OCI-LY7 (cell line): ENCODE measurements at regions of chr15 and their contacts with region 1.

Region 1: GRCh38 chr15:60649845-60650548 is 171.1 kb upstream of the ICE2 start:
- DNase-seq: no peak
- H3K4me3 ChIP-seq: no peak overlapping the region
- H3K27ac ChIP-seq: no peak overlapping the region
- H3K4me1 ChIP-seq: peaks cover 64% of the 10 kb centered on the region
- CTCF ChIP-seq: no peak

Region 2: DNA sequence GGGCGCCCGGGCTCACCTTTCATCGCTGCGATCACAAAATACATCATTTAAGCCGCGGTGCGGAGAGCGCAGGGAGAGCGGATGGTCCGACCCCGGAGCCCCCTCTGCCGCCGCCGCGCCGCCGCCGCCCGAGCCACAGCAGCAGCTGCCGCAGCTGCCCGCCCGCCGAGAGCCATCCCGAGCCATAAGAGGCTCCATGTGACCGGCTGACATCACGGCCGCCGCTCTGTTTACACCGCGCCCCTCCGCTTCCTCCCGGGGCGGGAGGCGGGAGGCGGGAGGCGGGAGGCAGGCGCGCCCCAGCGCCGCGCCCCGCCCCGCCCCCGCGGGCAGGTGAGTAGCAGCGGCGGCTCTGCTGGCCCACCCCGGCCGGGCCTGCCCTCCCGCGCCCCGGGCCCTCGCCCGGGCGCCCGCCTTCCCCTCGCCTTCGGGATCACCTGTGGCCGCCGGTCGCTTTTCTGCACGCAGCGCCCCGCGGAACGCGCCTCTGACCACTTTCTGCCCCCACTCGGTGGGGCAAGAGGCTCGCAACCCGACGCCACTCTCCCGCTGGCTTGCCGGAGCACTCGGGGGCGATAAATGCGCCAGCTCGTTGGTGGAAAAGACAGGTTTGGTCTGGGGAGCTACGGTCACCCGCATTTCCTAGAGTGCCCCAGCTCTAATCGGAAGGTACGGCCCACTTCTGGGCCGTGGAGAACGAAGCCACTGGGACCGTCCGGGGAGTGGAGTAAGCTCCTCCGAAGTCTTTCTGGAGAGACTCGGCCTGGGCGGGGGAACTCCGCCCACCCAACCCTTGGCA is 57.4 kb before region 1 on chr15:
- CTCF ChIA-PET with region 1: interaction called, 3 read pairs
- POLR2A ChIA-PET with region 1: no interaction called
- intact Hi-C with region 1: loop called (anchors 5 kb)
- DNase-seq: peak; percentile 78
- H3K4me3 ChIP-seq: peak overlapping the region; percentile 73
- H3K27ac ChIP-seq: no peak overlapping the region
- H3K4me1 ChIP-seq: peaks cover 17% of the 10 kb centered on the region
- CTCF ChIP-seq: no peak

Region 3: DNA sequence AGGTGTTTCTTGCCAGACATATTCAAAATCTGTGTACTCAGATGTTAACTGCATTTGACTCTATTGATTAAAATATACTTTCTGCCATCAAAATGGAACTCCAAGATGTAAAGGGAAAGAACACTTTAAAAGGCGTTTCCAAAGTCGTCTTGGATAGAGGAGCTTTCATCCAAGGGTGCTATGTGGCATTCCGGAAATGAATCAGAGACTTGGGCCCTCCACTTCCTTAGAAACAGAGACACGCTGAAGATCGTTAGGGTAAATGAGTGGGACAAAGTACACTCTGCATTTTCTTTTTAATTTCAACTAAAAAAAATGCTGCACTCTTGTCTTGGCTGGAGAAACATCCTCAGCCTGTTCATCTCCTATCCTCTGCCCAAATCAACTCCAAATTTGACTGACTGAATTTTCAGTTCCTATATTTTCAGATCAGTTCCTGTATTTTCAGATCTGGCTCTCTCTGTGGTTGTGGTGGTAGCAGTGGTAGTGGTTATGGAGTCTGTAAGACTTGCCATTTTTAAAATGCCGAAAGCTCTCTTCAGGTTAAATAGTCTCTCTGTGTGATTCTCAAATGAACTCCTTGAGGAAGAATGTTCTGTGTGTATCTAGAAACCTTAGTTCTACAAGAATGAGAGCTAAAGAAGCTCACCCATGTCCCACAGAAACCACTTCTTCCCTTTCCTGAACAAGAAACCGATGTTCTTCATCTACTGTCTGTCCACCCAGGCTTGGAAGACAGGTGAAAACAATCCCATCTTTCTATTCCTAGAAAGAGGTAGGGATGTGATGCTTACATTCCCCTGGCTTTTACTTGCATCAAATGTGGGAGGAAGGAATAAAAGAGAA is 14.3 kb before region 1 on chr15:
- CTCF ChIA-PET with region 1: no interaction called
- POLR2A ChIA-PET with region 1: interaction called, 8 read pairs
- intact Hi-C with region 1: loop called (anchors 2 kb)
- DNase-seq: peak; percentile 69
- H3K4me3 ChIP-seq: peak overlapping the region; percentile 38
- H3K27ac ChIP-seq: peak overlapping the region; percentile 33
- H3K4me1 ChIP-seq: peaks cover 20% of the 10 kb centered on the region
- CTCF ChIP-seq: no peak

Region 4: GRCh38 chr15:60695713-60696522 is 45.9 kb after region 1 on chr15:
- CTCF ChIA-PET with region 1: no interaction called
- POLR2A ChIA-PET with region 1: no interaction called
- intact Hi-C with region 1: no loop called
- DNase-seq: no peak
- H3K4me3 ChIP-seq: no peak overlapping the region
- H3K27ac ChIP-seq: no peak overlapping the region
- H3K4me1 ChIP-seq: no peaks in the 10 kb centered on the region
- CTCF ChIP-seq: no peak